Activated CD8-positive, alpha-beta T cell treated with anti-CD3 and anti-CD28 coated beads, Interleukin-2, amount 10 ng/mL, durations not matched to agents 7 days and 5 days (primary cell): ENCODE measurements at regions of chr1 and their contacts with region 1.

Region 1: DNA sequence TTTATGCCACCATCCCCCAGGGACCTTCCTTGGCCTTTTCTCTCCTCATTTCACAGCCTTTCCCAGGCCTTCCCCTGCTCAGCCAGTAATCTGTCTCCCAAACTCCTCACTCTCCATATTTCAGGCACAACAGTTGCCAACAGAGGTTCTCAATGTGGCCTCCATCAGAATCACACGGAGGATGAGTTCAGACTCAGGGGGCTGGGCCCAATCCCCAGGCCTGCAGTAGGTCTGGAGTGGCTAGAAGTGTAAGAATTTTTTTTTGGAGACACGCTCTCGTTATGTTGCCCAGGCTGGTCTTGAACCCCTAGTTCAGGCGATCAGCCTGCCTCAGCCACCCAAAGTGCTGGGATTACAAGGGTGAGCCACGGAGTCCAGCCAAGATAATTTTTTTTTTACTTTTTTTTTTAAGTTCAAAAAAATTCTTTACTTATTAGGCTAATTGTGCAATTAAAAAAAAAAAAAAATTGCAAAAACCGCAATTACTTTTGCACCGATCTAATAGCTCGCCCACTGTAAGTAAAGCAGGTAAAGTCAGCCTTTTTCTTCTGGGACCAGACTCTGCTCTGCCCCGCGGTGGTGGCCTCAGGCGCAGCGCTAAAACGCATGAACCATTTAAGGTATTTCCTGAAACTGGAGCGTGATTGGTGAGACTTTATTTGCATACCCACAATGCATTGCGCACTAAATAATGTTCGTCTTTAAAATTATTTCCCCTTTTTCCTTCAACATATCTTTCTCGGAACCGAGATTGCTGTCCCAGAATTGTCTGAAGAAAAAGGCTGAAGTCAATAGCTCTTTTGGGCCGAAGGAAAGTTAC is 18.7 kb downstream of the KIAA2013 start:
- DNase-seq: peak; percentile 94
- ATAC-seq: peak; percentile 47
- H3K4me3 Mint-ChIP-seq: peak overlapping the region; percentile 81
- H3K27ac Mint-ChIP-seq: peak overlapping the region; percentile 100
- H3K4me1 Mint-ChIP-seq: peaks cover 56% of the 10 kb centered on the region
- H3K27me3 Mint-ChIP-seq: peaks cover 5% of the 10 kb centered on the region

Region 2: GRCh38 chr1:11730429-11730891 is 177.0 kb before region 1 on chr1:
- CTCF ChIA-PET with region 1: no interaction called
- POLR2A ChIA-PET with region 1: interaction called, 32 read pairs
- DNase-seq: peak; percentile 81
- ATAC-seq: peak; percentile 82
- H3K4me3 Mint-ChIP-seq: peak overlapping the region; percentile 61
- H3K27ac Mint-ChIP-seq: peak overlapping the region; percentile 79
- H3K4me1 Mint-ChIP-seq: peaks cover 60% of the 10 kb centered on the region
- H3K27me3 Mint-ChIP-seq: no peaks in the 10 kb centered on the region

Region 3: GRCh38 chr1:11868331-11868955 is 39.0 kb before region 1 on chr1:
- CTCF ChIA-PET with region 1: no interaction called
- POLR2A ChIA-PET with region 1: interaction called, 28 read pairs
- DNase-seq: no peak
- ATAC-seq: no peak
- H3K4me3 Mint-ChIP-seq: no peak overlapping the region
- H3K27ac Mint-ChIP-seq: no peak overlapping the region
- H3K4me1 Mint-ChIP-seq: no peaks in the 10 kb centered on the region
- H3K27me3 Mint-ChIP-seq: peaks cover 12% of the 10 kb centered on the region

Region 4: DNA sequence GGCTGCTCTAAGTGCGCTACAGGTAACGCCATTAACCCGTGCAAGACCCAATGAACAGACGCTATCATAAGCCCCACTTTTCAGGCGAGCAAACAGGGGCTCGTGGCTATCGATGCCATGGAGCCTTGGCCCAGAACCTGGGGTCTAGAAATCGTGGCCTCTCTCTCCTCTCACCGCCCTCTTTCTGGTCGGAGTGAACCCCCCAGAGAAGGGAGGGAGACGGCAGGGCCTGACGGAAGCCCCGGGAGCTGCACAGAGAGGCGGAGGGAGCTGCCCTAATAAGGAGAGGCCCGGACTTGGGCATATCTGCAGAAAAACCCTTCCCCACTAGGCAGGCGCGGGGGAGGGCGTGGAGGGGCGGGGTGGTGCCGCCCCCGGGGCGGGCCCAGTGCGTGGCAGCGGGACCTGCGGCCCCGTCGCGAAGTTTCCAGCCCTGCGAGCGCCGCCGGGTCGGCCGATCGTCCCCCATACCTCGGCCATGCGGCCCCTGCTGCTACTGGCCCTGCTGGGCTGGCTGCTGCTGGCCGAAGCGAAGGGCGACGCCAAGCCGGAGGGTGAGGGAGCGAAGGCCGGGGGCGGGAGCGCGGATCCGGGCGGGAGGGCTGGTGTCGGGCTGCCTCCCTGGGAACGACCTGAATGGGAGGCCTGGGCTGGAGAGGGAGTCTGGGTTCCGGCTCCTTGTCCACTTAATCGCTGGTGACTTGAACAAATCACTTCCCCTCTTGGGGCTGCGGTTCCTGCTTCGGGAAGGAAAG is 27.0 kb after region 1 on chr1 and contains the start of gene PLOD1:
- CTCF ChIA-PET with region 1: interaction called, 5 read pairs
- POLR2A ChIA-PET with region 1: interaction called, 259 read pairs
- DNase-seq: peak; percentile 93
- ATAC-seq: peak; percentile 100
- H3K4me3 Mint-ChIP-seq: peak within 1 kb of the TSS; percentile 85
- H3K27ac Mint-ChIP-seq: peak within 1 kb of the TSS; percentile 85
- H3K4me1 Mint-ChIP-seq: peaks cover 22% of the 10 kb centered on the region
- H3K27me3 Mint-ChIP-seq: no peaks in the 10 kb centered on the region
- total RNA-seq, gene PLOD1: 25.0 to 26.1 TPM

Region 5: DNA sequence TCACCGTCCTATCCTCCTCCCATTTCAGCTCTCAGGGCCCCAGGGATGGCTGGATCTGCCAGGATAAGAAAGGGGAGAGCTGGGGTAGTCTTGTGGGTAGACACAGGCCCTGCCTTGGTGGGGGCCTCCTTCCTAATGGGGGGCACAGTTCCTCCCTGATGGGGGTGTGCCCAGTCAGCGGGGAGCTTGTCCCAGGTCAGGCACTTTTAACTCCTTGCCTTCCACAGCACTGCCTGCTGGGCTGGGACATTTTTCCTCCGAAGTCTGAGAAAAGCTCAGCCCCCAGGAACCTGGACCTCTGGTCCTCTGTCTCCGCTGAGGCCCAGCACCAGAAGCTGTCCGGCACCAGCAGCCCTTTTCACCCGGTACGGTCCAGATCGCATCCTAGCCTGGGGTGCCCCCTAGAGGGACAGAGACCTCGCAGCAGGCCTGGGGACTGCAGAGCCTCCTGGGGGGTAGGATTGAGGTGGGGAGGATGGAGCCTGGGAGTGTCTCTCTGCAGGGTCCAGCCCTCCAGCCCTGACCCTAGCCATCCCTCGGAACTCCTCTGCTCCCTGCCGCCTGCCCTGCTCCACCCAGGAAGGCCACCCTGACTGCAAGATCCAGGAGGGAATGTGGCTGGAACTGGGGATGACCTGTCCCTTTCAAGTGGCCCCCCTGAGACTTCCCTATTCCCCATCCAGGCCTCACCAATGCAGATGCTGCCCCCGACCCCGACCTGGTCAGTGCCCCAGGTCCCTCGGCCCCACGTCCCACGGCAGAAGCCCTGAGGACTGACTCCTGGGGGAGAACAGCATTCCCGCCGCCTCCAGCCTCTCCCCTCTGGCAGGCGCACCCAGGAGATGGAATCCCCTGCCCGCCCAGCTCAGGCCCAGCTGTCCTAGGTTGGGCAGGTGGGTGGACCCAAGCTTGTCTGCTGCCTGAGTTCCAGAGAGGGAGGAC is 123.8 kb after region 1 on chr1:
- CTCF ChIA-PET with region 1: interaction called, 4 read pairs
- POLR2A ChIA-PET with region 1: interaction called, 53 read pairs
- DNase-seq: peak; percentile 56
- ATAC-seq: peak; percentile 76
- H3K4me3 Mint-ChIP-seq: no peak overlapping the region
- H3K27ac Mint-ChIP-seq: no peak overlapping the region
- H3K4me1 Mint-ChIP-seq: no peaks in the 10 kb centered on the region
- H3K27me3 Mint-ChIP-seq: no peaks in the 10 kb centered on the region

Region 6: DNA sequence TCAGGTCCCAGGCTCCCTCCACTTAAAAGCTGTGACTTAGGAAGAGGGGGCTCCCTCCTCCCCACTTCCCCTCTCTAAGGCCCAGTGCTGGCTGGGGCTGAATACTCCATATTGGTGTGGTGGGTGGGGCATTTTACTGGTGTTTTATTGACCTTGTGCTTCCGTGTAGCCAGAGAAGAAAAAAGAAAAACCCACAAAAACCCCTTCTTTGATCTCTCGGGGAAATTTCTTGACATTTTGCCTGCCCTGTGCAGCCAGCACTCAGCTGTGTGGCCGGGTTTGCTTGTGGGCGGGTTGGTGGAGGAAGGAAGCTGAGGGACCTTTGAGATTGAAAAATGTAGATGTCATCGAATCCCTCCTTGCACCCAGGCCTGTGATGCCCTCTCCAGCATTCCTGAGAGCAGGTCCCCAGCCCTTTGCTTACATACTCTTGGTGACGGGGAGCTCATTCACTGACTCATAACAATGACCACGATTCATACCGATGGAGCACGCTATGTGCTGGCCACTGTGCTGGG is 180.4 kb after region 1 on chr1:
- CTCF ChIA-PET with region 1: no interaction called
- POLR2A ChIA-PET with region 1: interaction called, 42 read pairs
- DNase-seq: peak; percentile 80
- ATAC-seq: peak; percentile 76
- H3K4me3 Mint-ChIP-seq: peak overlapping the region; percentile 51
- H3K27ac Mint-ChIP-seq: peak overlapping the region; percentile 91
- H3K4me1 Mint-ChIP-seq: peaks cover 40% of the 10 kb centered on the region
- H3K27me3 Mint-ChIP-seq: no peaks in the 10 kb centered on the region

Region 7: GRCh38 chr1:12208764-12209494 is 301.4 kb after region 1 on chr1:
- CTCF ChIA-PET with region 1: no interaction called
- POLR2A ChIA-PET with region 1: interaction called, 10 read pairs
- DNase-seq: peak; percentile 88
- ATAC-seq: peak; percentile 76
- H3K4me3 Mint-ChIP-seq: no peak overlapping the region
- H3K27ac Mint-ChIP-seq: peak overlapping the region; percentile 78
- H3K4me1 Mint-ChIP-seq: peaks cover 63% of the 10 kb centered on the region
- H3K27me3 Mint-ChIP-seq: peaks cover 2% of the 10 kb centered on the region

Region 8: DNA sequence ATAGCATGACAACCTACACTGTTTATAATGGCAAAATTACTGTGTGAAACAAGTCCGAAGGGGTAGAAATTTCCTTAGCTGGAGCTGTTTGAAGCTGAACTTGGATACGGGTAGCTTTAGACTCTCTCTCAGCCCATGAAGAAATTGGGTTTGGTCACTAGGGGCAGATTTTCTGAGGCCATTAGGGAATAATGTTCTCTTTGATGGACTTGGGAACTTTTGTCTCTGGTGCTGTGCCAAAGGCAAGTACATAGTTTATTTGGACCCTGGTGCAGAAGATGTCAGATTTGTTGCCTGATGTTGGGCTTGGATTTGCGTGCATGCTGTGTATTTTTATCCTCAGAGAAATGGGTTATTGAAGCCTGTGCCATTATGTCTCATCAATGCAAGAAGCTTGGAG is 431.9 kb after region 1 on chr1:
- CTCF ChIA-PET with region 1: no interaction called
- POLR2A ChIA-PET with region 1: no interaction called
- DNase-seq: no peak
- ATAC-seq: no peak
- H3K4me3 Mint-ChIP-seq: no peak overlapping the region
- H3K27ac Mint-ChIP-seq: no peak overlapping the region
- H3K4me1 Mint-ChIP-seq: peaks cover 36% of the 10 kb centered on the region
- H3K27me3 Mint-ChIP-seq: no peaks in the 10 kb centered on the region

Region 9: DNA sequence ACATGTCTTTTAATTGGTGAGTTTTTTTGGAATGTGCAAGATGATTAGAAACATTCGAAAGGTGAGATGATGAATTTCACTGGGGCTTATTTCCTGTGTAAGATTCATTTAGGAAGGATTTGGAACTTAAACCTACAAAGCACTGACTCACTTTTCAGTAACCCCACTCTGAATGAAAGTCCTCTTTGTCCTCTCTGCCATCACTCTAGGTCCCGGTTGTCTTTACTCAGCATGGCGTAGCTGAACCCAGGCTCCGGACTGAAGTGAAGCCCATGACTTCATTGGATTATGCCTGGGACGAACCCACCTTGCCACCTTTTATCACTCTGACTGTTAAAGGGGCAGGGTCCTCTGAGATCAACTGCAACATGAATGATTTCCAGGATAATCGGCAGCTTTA is 461.8 kb after region 1 on chr1:
- CTCF ChIA-PET with region 1: no interaction called
- POLR2A ChIA-PET with region 1: no interaction called
- DNase-seq: no peak
- ATAC-seq: no peak
- H3K4me3 Mint-ChIP-seq: no peak overlapping the region
- H3K27ac Mint-ChIP-seq: no peak overlapping the region
- H3K4me1 Mint-ChIP-seq: peaks cover 5% of the 10 kb centered on the region
- H3K27me3 Mint-ChIP-seq: no peaks in the 10 kb centered on the region

Region 10: GRCh38 chr1:12596007-12596821 is 688.7 kb after region 1 on chr1:
- CTCF ChIA-PET with region 1: no interaction called
- POLR2A ChIA-PET with region 1: no interaction called
- DNase-seq: peak; percentile 28
- ATAC-seq: peak; percentile 27
- H3K4me3 Mint-ChIP-seq: no peak overlapping the region
- H3K27ac Mint-ChIP-seq: no peak overlapping the region
- H3K4me1 Mint-ChIP-seq: peaks cover 65% of the 10 kb centered on the region
- H3K27me3 Mint-ChIP-seq: no peaks in the 10 kb centered on the region